Activated CD8-positive, alpha-beta T cell treated with anti-CD3 and anti-CD28 coated beads for 36 hours (primary cell): ENCODE measurements at regions of chr19 and their contacts with region 1.

Region 1: GRCh38 chr19:18408053-18408476 is 10.6 kb upstream of the LRRC25 start:
- DNase-seq: peak; percentile 62
- ATAC-seq: peak; percentile 40
- H3K4me3 Mint-ChIP-seq: no peak overlapping the region
- H3K27ac Mint-ChIP-seq: no peak overlapping the region
- H3K4me1 Mint-ChIP-seq: peaks cover 5% of the 10 kb centered on the region
- H3K27me3 Mint-ChIP-seq: peaks cover 6% of the 10 kb centered on the region
- CTCF ChIP-seq: peak; percentile 58

Region 2: DNA sequence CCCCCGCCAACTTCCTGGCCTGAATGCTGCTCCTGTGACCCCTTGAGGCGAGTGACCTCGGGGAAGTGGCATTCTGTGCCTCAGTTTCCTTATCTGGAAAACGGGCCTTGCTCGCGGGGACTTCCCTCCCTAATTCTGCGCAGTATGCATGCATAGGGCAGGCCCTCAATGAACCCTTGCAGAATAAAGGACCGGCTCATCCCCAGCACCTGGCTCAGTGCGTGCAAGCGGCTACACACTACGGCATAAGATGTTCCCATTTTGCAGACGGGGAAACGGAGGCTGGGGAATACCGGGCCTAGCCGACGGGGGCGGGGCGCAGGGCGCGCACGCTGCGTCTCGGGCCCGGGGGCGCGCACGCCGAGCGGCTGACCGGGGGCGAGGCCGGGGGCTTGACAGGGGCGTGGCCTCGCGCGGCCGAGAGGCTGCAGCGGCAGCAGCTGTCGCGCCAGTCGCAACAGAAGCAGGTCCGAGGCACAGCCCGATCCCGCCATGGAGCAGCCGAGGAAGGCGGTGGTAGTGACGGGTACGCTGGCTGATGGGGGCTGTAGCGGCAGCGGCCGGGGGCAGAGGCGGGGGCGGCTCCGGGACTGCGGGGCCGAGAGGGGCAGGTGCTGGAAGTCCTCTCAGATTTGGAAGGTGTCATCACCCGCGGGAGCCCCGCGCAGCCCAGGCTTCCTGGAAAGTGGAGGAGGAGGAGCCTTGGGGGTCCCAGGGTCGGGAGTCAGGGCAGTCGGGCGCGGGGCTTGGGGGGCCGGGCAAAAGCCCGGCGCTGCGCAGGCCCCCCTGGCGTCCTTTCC is 67.7 kb before region 1 on chr19 and contains the start of gene PGPEP1:
- CTCF ChIA-PET with region 1: interaction called, 16 read pairs
- POLR2A ChIA-PET with region 1: interaction called, 4 read pairs
- intact Hi-C with region 1: loop called (anchors 5 kb)
- DNase-seq: peak; percentile 63
- ATAC-seq: peak; percentile 60
- H3K4me3 Mint-ChIP-seq: peak within 1 kb of the TSS; percentile 70
- H3K27ac Mint-ChIP-seq: peak within 1 kb of the TSS; percentile 84
- H3K4me1 Mint-ChIP-seq: peaks cover 16% of the 10 kb centered on the region
- H3K27me3 Mint-ChIP-seq: no peaks in the 10 kb centered on the region
- CTCF ChIP-seq: no peak
- total RNA-seq, gene PGPEP1: 21.7 to 23.9 TPM

Region 3: DNA sequence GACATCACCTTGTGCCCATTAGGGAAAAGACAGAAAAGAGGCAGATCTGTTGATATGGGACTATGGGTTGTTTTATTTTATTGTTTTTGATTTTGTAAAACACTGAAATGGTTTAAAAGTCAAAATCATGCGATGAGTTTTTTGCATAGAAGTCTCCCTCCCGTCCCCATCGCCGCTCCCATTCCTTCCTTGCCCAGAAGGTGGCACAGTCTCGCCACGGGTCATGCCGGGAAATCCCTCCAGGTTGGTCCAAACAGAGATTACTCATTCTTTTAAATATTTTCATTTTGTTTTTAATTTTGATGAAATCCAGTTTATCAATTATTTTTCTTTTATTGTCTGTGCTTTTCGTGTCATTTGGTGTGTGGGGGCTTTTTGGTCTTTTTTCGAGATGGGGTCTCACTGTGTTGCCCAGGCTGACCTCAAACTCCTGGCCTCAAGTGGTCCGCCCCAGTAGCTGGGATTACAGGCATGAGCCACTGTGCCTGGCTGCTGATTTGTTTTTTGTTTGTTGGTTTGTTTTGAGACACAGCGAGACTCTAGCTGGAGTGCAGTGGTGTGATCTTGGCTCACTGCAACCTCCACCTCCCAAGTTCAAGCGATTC is 58.4 kb before region 1 on chr19:
- CTCF ChIA-PET with region 1: interaction called, 20 read pairs
- POLR2A ChIA-PET with region 1: no interaction called
- intact Hi-C with region 1: loop called (anchors 5 kb)
- DNase-seq: peak; percentile 64
- ATAC-seq: peak; percentile 58
- H3K4me3 Mint-ChIP-seq: no peak overlapping the region
- H3K27ac Mint-ChIP-seq: no peak overlapping the region
- H3K4me1 Mint-ChIP-seq: peaks cover 3% of the 10 kb centered on the region
- H3K27me3 Mint-ChIP-seq: no peaks in the 10 kb centered on the region
- CTCF ChIP-seq: peak; percentile 58